Naive thymus-derived CD8-positive, alpha-beta T cell (primary cell): ENCODE measurements at regions of chr12 and their contacts with region 1.

Region 1: DNA sequence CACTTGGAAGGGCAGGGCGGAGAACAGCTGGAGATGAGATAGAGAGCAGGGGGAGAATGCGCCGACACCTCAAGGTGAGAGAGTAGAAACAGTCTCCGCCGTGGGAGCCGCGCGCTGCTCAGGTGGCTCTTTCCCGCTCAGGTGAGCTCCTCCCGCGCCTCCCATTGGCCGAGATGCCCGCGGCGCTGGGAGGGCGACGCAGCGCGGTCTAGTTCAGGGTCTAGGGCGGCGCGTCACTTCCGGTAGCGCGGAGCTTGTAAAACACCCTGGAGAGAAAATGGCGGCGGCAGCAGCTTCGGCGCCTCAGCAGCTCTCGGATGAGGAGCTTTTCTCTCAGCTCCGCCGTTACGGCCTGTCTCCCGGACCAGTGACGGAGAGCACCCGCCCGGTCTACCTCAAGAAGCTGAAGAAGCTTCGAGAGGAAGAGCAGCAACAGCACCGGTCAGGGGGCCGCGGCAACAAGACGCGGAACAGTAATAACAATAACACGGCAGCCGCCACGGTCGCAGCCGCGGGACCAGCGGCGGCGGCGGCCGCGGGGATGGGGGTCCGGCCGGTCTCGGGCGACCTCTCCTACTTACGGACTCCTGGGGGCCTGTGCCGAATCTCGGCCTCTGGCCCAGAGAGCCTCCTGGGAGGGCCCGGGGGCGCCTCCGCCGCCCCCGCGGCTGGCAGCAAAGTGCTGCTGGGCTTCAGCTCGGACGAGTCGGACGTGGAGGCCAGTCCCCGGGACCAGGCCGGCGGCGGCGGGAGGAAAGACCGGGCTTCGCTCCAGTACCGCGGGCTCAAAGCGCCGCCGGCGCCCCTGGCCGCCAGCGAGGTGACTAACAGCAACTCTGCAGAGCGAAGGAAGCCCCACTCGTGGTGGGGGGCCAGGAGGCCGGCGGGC is at the start of gene LEMD3:
- DNase-seq: peak; percentile 88 to 97 (median 94)
- ATAC-seq: peak; percentile 92 to 94
- H3K4me3 Mint-ChIP-seq: peak within 1 kb of the TSS; percentile 92 to 100 (median 100)
- H3K27ac Mint-ChIP-seq: peak within 1 kb of the TSS; percentile 97 to 100 (median 100)
- H3K4me1 Mint-ChIP-seq: peaks cover 18 to 37% (median 34%) of the 10 kb centered on the region in 4 donors
- H3K27me3 Mint-ChIP-seq: peaks cover 0 to 6% (median 0%) of the 10 kb centered on the region in 5 donors
- polyA plus RNA-seq, gene LEMD3: 28.2 to 31.5 (median 30.9) TPM

Region 2: GRCh38 chr12:65156366-65156841 is 13.2 kb before region 1 on chr12:
- POLR2A ChIA-PET with region 1: interaction called, 19 read pairs
- DNase-seq: peak in 3 of 10 donors; percentile 13 to 39 (median 25)
- ATAC-seq: peak; percentile 37 to 54
- H3K4me3 Mint-ChIP-seq: peak overlapping the region in 8 of 10 donors; percentile 10 to 43 (median 24)
- H3K27ac Mint-ChIP-seq: peak overlapping the region in 5 of 10 donors; percentile 18 to 65 (median 46)
- H3K4me1 Mint-ChIP-seq: peaks cover 3 to 16% (median 11%) of the 10 kb centered on the region in 4 donors
- H3K27me3 Mint-ChIP-seq: peaks cover 7 to 26% (median 17%) of the 10 kb centered on the region in 5 donors

Region 3: GRCh38 chr12:65209655-65210043 is 40.1 kb after region 1 on chr12:
- POLR2A ChIA-PET with region 1: interaction called, 16 read pairs
- DNase-seq: no peak
- ATAC-seq: peak in 1 of 2 donors; percentile 42
- H3K4me3 Mint-ChIP-seq: peak overlapping the region; percentile 49 to 85 (median 76)
- H3K27ac Mint-ChIP-seq: peak overlapping the region; percentile 32 to 94 (median 86)
- H3K4me1 Mint-ChIP-seq: peaks cover 19 to 62% (median 46%) of the 10 kb centered on the region in 4 donors
- H3K27me3 Mint-ChIP-seq: no peaks in the 10 kb centered on the region